ENCODE measurements at regions of chr2 and their contacts with region 1.

Region 1: DNA sequence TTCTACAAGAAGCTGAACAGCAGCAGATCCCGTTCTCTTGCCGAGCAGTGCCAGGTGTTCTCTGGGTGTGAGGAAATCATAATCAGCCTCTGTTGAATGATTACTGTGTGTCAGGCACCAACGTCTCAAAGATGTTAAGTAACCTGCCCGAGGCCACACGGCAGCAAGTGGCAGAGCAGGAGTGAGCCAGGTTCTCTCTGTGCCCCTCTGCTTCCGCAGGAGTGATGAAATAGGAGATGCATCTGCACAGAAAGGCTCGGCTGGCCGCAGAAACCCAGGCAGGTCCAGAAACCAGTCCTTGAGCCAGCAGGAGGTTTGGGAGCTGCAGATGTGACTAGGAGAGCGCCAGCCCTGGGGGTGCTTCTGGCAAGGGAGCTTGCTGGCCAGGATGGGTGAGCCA is 68.4 kb downstream of the COPS7B start:
- DNase-seq: peak in 1 of 2 experiments; percentile 81
- H3K4me3 ChIP-seq: no peak overlapping the region
- H3K27ac ChIP-seq: no peak overlapping the region
- H3K4me1 ChIP-seq: no peaks in the 10 kb centered on the region
- H3K27me3 ChIP-seq: peaks cover 19% of the 10 kb centered on the region
- CTCF ChIP-seq: no peak

Region 2: DNA sequence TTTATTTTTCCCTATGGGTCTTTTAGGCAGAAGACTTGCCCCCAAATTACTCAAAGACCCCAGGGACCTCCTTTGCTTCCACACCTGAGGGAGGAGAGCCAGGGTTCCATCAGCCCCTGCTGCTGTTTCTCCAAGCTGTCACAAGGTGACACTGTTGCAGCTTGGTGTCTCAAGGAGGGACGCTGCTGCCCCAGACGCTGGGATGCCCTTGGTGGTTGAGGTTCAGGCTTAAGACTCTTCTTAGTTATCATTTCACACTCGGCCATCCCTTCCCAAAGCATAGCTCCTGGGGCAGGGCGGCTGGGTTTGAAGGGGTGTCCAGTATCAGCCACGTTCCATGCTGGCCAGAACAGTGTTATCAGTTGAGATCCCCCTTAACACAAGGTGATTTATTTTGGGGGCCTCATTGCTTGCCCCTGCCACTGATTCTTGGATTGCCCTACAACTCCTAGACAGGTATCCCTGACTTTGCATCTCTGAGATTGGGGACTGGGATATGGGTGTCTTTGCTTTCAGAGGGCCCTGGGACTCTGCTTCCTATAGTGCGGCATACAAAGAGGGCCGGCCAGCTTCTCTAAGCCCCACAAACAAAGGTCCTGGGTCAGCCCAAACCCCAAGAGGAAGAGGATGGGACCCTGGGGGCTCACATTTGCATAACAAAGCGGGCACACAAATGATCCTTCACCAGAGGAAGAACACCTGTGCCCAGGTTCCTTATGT is 952.3 kb before region 1 on chr2:
- CTCF ChIA-PET with region 1: no interaction called
- POLR2A ChIA-PET with region 1: no interaction called
- intact Hi-C with region 1: no loop called
- DNase-seq: peak in 1 of 2 experiments; percentile 43
- H3K4me3 ChIP-seq: no peak overlapping the region
- H3K27ac ChIP-seq: no peak overlapping the region
- H3K4me1 ChIP-seq: no peaks in the 10 kb centered on the region
- H3K27me3 ChIP-seq: peaks cover 35% of the 10 kb centered on the region
- CTCF ChIP-seq: peak; percentile 84

Region 3: DNA sequence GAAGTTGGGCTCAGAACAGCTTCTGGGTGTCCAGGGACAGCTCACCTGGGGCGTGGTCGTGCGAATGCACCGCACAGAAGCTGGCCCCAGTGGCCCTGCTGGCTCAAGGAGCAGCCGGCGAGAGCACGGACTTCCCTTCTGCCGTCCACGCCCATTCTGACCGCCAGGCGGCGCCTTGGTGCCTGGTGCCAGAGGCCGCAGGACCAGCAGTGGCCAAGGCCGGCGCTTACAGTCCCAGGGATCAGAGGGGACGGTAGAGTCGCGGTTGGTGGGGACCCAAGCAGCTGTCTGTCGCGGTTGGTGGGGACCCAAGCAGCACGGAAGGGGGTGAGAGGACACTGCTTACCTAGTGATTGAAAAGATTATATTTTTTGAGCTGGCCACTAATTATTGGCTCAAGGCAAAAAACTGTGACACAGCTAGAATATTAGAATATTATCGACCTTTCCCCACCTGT is 45.8 kb after region 1 on chr2:
- CTCF ChIA-PET with region 1: no interaction called
- POLR2A ChIA-PET with region 1: no interaction called
- intact Hi-C with region 1: loop called (anchors 1 kb)
- DNase-seq: peak; percentile 64 to 88
- H3K4me3 ChIP-seq: no peak overlapping the region
- H3K27ac ChIP-seq: no peak overlapping the region
- H3K4me1 ChIP-seq: no peaks in the 10 kb centered on the region
- H3K27me3 ChIP-seq: no peaks in the 10 kb centered on the region
- CTCF ChIP-seq: peak; percentile 91

Region 4: GRCh38 chr2:232142049-232142448 is 287.4 kb after region 1 on chr2:
- CTCF ChIA-PET with region 1: no interaction called
- POLR2A ChIA-PET with region 1: no interaction called
- intact Hi-C with region 1: loop called (anchors 5 kb)
- DNase-seq: peak in 1 of 2 experiments; percentile 5
- H3K4me3 ChIP-seq: no peak overlapping the region
- H3K27ac ChIP-seq: no peak overlapping the region
- H3K4me1 ChIP-seq: no peaks in the 10 kb centered on the region
- H3K27me3 ChIP-seq: no peaks in the 10 kb centered on the region
- CTCF ChIP-seq: peak; percentile 74

Region 5: DNA sequence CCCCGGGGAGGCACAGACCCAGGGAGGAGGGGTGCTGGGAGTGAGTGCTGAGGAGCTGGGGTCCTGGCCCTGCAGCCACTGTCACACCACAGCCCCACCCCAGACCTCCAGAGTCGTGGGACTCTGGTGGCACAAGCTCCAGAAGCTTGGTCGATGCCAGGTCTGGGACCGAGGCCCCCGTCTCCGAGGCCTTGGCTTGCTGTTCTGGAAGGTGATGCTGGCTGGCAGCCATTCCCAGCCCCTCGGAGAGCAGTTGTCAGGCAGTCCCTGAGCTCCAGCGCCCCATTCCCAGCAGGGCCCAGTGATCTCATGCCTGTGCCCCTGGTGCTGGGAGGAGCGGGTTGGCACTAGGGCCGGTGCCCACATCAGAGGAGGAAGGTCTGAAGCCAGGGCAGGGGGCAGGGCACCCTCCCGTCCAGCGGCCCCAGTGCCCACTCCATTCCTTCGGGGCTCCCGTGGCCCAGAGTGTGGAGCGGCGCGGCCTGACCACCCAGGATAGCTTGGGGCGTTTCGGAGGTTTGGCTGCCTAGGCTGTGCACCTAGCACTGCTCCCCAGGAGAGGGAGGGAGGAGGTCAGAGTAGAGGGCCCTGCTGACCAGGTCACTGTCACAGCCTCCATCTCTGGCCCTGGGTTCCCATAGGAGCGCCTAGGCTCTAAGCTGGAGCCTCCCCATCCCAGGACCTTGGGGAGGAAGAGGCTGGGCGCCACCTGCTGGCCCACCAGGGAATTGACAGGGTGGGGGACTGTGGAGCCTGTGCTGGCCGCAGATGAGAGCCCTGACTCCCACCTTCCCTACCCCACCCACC is 584.5 kb after region 1 on chr2:
- CTCF ChIA-PET with region 1: no interaction called
- POLR2A ChIA-PET with region 1: no interaction called
- intact Hi-C with region 1: loop called (anchors 1 kb)
- DNase-seq: peak in 1 of 2 experiments; percentile 60
- H3K4me3 ChIP-seq: no peak overlapping the region
- H3K27ac ChIP-seq: no peak overlapping the region
- H3K4me1 ChIP-seq: peaks cover 10% of the 10 kb centered on the region
- H3K27me3 ChIP-seq: no peaks in the 10 kb centered on the region
- CTCF ChIP-seq: peak; percentile 65

Measured in PC-9 (cell line).